GM10248 (cell line): ENCODE measurements at regions of chr7 and their contacts with region 1.

Region 1: DNA sequence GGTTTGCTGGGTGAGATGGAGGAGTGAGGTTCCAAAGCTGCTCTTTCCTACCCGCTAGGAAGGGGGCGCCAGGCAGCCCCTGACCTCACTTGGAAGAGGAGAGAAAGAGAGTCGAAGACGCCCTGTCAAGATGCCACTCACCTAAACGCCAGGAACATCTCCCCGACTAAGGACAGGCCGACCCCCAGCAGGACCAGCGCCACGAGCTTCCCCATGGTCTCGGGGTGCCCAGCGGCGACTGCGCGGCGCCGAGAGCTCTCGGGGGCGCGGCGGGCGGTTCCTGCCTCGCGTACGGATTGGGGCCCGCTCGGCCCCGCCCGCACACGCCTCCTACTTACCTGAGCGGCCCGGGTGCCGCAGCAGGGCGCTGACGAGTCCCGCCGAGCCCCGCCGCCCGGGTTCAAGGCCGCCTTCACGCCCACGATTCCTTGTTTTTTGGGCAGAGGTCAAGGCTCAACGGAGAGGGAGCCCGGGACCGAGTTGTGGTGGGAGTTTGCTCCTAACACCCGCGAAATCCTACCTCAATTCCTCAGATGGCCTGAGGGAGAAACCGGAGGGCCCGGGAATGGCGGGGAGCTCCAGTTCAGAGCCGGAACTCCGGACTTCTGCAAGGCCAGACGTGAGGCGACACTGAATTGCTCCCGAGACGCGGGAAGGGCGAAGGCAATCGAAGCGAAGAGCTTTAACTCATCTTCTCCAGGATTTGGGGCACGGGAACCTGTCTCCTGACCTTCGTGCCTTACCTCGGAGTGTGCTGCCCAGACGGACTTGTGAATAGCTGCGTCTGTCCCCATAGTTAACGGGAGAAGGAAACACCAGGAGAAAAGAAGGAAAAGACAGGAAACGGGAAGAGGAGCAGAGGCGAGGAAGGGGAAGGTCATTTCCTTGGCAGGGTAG is at the start of gene PON3:
- DNase-seq: peak; percentile 15
- CTCF ChIP-seq: peak; percentile 16

Region 2: GRCh38 chr7:95407751-95408150 is 11.4 kb after region 1 on chr7:
- CTCF ChIA-PET with region 1: interaction called, 12 read pairs
- POLR2A ChIA-PET with region 1: no interaction called
- DNase-seq: no peak
- CTCF ChIP-seq: no peak

Region 3: GRCh38 chr7:95517458-95517857 is 121.1 kb after region 1 on chr7:
- CTCF ChIA-PET with region 1: no interaction called
- POLR2A ChIA-PET with region 1: no interaction called
- DNase-seq: no peak
- CTCF ChIP-seq: no peak

Region 4: DNA sequence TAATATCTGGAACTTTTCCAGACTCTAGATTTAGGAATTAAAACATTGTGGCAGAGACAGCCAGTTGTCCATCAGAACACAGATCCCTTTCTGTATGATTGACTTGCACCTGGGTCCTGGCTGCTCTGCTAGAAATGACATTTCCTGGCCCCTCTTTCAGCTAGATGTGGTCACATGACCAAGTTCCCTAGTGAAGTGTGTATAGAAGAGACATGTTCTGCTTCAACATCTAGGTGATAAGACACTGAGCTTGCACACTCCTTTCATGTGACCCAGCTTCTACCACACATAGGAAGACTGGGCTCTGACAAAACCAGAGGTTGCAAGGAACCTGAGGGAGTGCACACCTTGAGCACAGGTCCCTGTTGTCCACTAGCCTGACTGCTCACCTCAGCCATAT is 353.1 kb after region 1 on chr7:
- CTCF ChIA-PET with region 1: no interaction called
- POLR2A ChIA-PET with region 1: no interaction called
- DNase-seq: no peak
- CTCF ChIP-seq: no peak